Activated T-helper 1 cell treated with anti-CD3 and anti-CD28 coated beads, Interleukin-12 subunit alpha, Interleukin-12 subunit beta, Interleukin-2, Interleukin-4 antibody, amounts not matched to agents 30 ng/mL and 10 ng/mL and 1 ng/mL, durations not matched to agents 14 hours and 24 hours and 36 hours (primary cell): ENCODE measurements at regions of chr16 and their contacts with region 1.

Region 1: DNA sequence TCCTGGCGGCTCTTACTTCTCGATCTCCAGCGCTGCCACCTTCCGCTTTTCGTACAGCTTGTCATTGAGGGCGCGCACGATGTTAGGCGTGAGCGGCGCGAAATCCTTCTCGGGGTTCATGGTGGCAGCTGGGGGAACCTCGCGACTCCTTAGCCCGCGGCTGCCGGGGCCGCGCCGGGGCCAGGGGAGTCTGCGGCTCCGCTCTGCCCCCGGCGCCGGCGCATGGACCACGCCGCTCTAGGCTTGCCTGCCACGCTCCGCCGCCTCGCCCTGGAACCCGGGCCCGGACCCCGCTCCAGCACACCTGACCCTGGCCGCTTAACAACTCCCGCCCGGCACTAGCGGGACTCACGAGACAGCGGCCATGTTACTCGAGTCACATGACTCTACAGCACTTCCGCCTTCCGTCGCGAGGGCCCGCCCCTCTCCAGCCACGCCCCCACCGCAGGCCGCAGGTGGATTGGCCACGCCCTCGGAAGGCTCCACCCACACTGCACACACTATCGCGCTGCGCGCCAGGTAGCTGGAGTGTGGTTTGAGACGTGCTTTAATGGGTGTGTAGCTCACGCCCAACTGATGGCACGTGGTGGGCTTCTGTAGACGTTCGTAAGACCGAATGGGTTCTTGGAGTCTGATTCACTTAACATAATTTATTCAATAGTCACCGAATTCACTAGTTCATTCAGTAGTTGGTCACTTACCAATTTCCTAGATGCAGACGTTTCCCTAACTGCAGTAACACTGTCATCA is at the start of gene VAC14:
- DNase-seq: peak; percentile 93
- H3K4me3 Mint-ChIP-seq: peak within 1 kb of the TSS; percentile 97
- H3K27ac Mint-ChIP-seq: peak within 1 kb of the TSS; percentile 89
- H3K4me1 Mint-ChIP-seq: peaks cover 27% of the 10 kb centered on the region
- H3K27me3 Mint-ChIP-seq: peaks cover 11% of the 10 kb centered on the region
- total RNA-seq, gene VAC14: 36.6 and 37.5 TPM in 2 replicates

Region 2: DNA sequence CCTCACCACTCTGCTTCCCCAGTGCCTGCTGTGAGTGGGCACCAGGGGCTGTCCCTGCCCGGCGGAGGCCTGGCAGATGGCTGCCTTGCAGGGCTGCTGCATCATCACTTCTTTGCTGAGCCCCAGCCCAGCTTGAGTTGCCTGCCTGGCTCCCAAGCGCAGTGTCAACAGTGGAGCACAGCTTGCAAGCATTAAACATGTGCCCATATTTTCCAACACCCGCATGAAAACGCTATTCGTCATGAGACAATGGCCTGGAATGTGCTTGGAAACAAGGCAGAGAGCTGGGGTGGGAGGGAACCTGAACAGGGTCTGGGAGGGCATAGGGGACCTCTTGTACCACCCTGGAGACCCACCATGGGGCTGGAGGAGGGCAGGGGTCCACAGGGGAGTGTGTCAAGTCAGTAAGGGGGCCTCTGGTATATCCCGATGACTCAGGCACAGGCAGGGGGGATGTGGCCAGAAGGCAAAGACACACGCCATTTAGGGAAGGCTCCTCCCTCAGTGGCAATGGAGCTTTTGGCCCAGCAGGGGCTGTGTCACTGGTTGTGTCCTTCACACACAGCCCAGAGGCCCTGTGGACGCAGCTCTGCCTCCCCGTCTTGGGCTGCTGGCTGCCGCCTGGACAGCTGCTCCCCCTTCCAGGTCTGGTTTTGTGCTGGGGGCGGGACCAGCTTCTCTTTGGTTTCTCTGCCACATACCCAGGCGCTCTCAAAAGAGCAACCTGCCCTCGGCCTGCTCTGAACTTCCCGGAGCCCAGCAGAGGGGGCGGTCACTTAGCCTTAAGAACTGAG is 97.7 kb before region 1 on chr16:
- intact Hi-C with region 1: no loop called
- DNase-seq: no peak
- H3K4me3 Mint-ChIP-seq: no peak overlapping the region
- H3K27ac Mint-ChIP-seq: no peak overlapping the region
- H3K4me1 Mint-ChIP-seq: no peaks in the 10 kb centered on the region
- H3K27me3 Mint-ChIP-seq: no peaks in the 10 kb centered on the region

Region 3: DNA sequence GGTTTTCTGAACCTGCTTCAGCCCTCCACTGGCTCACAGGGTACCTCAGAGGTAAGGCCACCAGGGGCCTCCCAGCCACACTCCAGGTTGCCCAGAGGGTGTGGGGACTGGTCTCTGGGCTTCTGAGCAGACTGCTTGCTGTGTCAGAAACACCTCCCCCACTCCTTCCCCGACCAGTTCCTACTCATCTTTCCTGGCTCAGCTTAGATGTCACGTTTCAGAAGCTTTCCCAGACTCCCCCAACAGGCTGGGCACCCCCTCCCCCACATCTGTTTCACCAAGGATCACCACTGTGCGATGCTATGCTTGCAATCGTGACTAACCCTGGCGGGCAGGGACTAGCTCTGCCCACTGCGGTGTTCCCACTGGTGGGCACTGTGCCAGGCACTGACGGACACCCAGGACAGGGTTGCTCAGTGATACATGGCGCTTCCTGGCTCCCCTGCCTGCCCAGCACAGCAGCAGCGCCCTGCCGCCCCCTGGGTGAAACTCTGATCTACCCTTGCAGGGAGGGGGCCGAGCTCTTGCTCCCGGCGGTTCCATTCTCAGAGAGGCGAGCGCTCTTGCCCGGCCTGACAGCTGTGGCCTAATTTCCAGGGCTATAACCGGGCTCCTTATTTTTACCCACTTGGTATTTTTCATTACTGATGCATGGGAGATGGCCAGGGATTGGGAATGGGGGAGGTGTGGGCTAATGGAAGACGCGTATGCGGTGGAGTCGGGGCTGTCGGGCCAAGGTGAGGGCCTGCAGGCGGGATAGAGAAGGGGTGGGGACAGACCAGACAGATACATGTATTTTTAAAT is 85.7 kb before region 1 on chr16:
- intact Hi-C with region 1: no loop called
- DNase-seq: no peak
- H3K4me3 Mint-ChIP-seq: no peak overlapping the region
- H3K27ac Mint-ChIP-seq: no peak overlapping the region
- H3K4me1 Mint-ChIP-seq: peaks cover under 1% of the 10 kb centered on the region
- H3K27me3 Mint-ChIP-seq: no peaks in the 10 kb centered on the region

Region 4: GRCh38 chr16:71358464-71358998 is 557.6 kb after region 1 on chr16 and contains the start of gene CALB2:
- intact Hi-C with region 1: loop called (anchors 10 kb)
- DNase-seq: peak; percentile 47
- H3K4me3 Mint-ChIP-seq: no peak within 1 kb of the TSS
- H3K27ac Mint-ChIP-seq: no peak within 1 kb of the TSS
- H3K4me1 Mint-ChIP-seq: no peaks in the 10 kb centered on the region
- H3K27me3 Mint-ChIP-seq: peaks cover 3% of the 10 kb centered on the region
- total RNA-seq, gene CALB2: not detected in 2 replicates

Region 5: DNA sequence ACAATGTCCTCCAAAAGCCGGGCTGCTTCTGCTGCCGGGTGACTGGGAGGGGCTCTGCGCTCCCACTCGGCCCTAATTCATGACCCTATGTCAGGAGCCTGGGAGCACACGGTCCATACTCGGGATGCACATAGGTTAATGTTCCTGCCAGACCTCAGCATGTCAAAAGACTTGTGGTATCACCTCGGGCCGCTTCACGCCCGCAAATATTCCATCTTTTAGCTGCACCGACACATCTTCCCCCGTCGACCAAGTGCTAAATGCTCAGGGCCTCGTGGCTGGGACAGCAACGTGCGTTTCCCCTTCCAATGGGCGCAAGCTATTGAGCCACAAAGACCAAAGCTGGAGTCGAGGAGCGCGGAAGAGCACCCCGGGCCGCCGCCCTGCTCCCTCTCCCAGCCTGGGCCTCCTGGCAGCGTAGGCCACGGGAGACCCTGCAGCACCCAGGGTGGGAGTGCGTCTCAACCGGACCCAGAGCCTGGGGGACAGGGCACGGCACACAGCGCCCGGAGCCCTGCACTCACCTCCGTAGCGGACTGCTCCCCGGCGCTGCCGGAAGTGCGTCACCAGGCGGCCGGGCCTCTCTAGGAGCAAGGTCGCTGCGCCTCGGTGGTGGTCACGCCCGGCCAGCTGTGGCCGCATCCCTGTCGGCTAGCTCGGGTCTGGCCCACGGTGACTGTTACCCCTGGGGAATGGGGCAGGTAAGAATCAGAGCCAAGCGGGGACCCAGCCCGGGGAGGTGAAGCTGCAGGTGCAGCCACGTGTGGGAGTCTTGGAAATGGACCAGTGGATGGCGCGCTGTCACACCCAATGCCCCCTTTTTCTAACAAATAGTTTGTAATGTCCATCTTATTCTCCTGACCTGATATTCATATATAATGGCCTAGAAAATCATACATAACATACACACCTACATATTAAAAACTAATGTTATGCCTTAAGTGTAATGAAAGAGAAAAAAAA is 661.0 kb after region 1 on chr16 and contains the start of gene ZNF23:
- intact Hi-C with region 1: loop called (anchors 10 kb)
- DNase-seq: peak; percentile 71
- H3K4me3 Mint-ChIP-seq: peak within 1 kb of the TSS; percentile 86
- H3K27ac Mint-ChIP-seq: peak within 1 kb of the TSS; percentile 86
- H3K4me1 Mint-ChIP-seq: peaks cover 13% of the 10 kb centered on the region
- H3K27me3 Mint-ChIP-seq: peaks cover 1% of the 10 kb centered on the region
- total RNA-seq, gene ZNF23: 4.9 and 6.4 TPM in 2 replicates

Region 6: GRCh38 chr16:72093448-72094265 is 1292.7 kb after region 1 on chr16 and contains the starts of genes DHX38 and TXNL4B:
- intact Hi-C with region 1: loop called (anchors 5 kb)
- DNase-seq: peak; percentile 92
- H3K4me3 Mint-ChIP-seq: peak within 1 kb of the TSS; percentile 99
- H3K27ac Mint-ChIP-seq: peak within 1 kb of the TSS; percentile 99
- H3K4me1 Mint-ChIP-seq: peaks cover 64% of the 10 kb centered on the region
- H3K27me3 Mint-ChIP-seq: no peaks in the 10 kb centered on the region
- total RNA-seq, gene DHX38: 89.8 and 99.4 TPM in 2 replicates
- total RNA-seq, gene TXNL4B: 24.0 and 25.1 TPM in 2 replicates